A549 (cell line): ENCODE measurements at regions of chr17 and their contacts with region 1.

Region 1: DNA sequence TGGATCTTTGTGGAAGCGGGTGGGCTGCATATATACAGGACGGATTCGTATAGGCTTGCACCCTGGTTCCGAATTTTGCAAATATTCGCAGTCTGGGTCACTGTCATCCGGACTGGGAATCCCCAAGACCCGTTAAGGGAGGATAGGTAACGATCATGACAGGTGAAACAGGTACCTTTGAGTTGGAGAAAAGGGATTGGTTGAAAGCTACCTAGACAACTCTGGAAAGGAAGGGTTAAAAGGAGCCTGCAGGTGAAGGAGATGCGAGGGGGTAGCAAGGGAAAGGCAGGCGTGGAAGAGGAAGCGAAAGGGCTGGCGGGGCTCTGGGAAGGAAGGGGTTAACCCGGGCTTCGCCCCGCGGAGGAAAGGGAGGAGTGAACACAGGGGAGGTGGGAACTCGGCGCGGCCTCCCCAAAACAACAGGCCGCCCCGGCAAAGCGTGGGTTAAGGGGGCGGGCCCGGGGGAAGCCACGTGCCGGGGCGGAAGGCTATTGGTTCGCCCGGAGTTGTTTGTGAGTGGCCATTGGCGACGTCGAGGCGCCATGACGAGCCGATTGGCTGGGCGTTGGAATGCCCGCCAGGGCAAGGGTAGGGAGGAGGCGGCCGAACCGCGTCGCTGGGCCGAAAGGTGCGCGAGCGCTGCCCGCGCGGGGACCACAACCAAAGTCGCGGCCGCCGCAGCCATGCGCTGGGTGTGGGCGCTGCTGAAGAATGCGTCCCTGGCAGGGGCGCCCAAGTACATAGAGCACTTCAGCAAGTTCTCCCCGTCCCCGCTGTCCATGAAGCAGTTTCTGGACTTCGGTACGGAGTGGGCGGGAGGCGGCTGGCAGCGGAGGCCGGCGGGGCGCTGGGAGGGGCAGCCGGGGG is at the start of gene PDK2:
- DNase-seq: peak; percentile 98 to 99
- ATAC-seq: peak; percentile 67 to 94
- H3K4me3 ChIP-seq: peak within 1 kb of the TSS; percentile 76
- H3K27ac ChIP-seq: peak within 1 kb of the TSS; percentile 82 to 90
- H3K4me1 ChIP-seq: peaks cover 20% of the 10 kb centered on the region
- CTCF ChIP-seq: no peak
- EP300 ChIP-seq: no peak
- POLR2A ChIP-seq: peak; percentile 46
- RAD21 ChIP-seq: no peak
- polyA plus RNA-seq, gene PDK2: 28.5 and 34.4 TPM in 2 replicates

Region 2: GRCh38 chr17:50020841-50021599 is 74.0 kb before region 1 on chr17:
- CTCF ChIA-PET with region 1: interaction called, 190 read pairs
- POLR2A ChIA-PET with region 1: no interaction called
- DNase-seq: no peak
- ATAC-seq: 0 out of 6 replicates have a peak, but pooled peaks of 1 of the 2 experiments have one; percentile 40
- H3K4me3 ChIP-seq: no peak overlapping the region
- H3K27ac ChIP-seq: no peak overlapping the region
- H3K4me1 ChIP-seq: peaks cover under 1% of the 10 kb centered on the region; the same call in 1 of the 3 replicates
- CTCF ChIP-seq: no peak
- EP300 ChIP-seq: no peak
- POLR2A ChIP-seq: no peak
- RAD21 ChIP-seq: no peak

Region 3: DNA sequence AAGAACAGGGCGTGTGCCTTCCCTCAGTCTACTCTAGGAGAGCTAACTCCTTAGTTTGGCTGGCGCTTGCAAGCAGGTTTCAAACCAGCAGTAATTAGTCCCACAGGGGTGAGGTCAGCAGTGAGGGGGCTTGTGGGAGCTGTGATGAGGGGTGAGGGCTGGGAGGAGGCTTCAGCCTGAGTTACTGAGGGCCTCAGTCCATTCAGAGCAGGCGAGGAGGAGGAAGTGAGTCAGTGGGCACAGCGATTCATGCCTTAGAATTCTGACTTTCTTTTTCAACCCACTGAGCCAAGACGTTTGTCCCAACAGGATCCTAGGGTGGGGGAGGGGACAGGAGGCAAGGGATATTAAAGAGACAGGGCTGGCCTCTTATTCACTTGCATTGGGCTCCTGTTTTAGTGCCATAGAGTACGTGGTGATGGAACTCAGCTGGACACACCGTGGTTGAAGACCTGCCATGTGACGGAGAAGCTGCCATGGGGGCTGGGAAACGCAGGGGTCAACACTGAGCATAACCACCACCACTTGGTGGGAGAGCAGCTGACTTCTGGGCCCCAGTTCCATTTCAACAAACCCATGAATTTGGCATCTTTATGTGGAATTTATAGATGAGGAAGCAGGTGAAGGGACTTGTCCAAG is 47.4 kb before region 1 on chr17:
- CTCF ChIA-PET with region 1: interaction called, 285 read pairs
- POLR2A ChIA-PET with region 1: no interaction called
- DNase-seq: peak in 1 of 2 experiments; percentile 49
- ATAC-seq: peak in 1 of 2 experiments; percentile 5; a peak in 1 of 6 replicates
- H3K4me3 ChIP-seq: no peak overlapping the region
- H3K27ac ChIP-seq: peak overlapping the region; percentile 64 to 92
- H3K4me1 ChIP-seq: peaks cover 92% of the 10 kb centered on the region
- CTCF ChIP-seq: no peak
- EP300 ChIP-seq: no peak
- POLR2A ChIP-seq: no peak
- RAD21 ChIP-seq: no peak

Region 4: DNA sequence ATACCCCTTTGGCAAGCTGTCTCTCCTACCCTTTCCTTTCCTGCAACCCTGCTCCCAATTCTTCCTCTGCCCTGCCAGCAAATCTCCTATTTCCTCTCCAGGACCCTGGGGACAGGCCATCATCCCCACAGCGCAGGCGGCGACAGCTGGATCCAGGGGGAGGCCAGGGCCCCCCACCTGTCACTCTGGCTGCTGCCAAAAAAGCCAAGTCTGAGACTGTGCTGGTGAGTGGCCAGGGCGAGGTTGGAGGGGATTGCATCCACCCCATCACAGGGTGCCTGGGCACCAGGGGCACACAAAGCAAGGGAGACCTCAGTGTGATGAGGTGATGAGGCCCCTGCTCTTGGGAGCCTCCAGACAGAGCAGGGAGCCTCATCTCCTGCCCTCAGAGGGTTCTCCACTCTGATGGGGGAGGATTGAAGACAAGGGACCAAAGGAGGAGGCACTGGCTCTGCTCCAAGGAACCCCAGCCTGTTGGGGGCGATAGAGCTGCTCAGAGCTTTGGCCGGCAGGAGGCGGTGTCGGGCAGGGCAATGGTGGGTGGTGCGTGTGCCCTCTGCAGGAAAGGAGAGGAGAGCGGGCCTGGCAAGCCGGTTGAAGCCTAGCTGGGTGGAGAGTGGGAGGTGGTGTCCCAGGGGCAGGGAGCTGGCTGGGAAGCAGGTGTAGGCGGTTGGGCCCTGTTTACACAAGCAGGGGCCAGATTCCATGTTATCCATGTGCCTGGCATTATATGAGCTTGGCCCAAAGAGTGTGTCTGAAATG is 15.5 kb before region 1 on chr17:
- CTCF ChIA-PET with region 1: interaction called, 176 read pairs
- POLR2A ChIA-PET with region 1: interaction called, 3 read pairs
- DNase-seq: peak; percentile 79 to 87
- ATAC-seq: peak; percentile 73 to 88
- H3K4me3 ChIP-seq: no peak overlapping the region
- H3K27ac ChIP-seq: peak overlapping the region in 1 of 2 experiments; percentile 71; a peak in 3 of 6 replicates
- H3K4me1 ChIP-seq: peaks cover 12% of the 10 kb centered on the region; the same call in 2 of the 3 replicates
- CTCF ChIP-seq: peak; percentile 97
- EP300 ChIP-seq: no peak
- POLR2A ChIP-seq: no peak
- RAD21 ChIP-seq: peak; percentile 76 to 77

Region 5: GRCh38 chr17:50161023-50161910 is 66.3 kb after region 1 on chr17:
- CTCF ChIA-PET with region 1: interaction called, 1,356 read pairs
- POLR2A ChIA-PET with region 1: no interaction called
- DNase-seq: peak; percentile 92 to 100
- ATAC-seq: peak; percentile 88 to 96
- H3K4me3 ChIP-seq: peak overlapping the region; percentile 74
- H3K27ac ChIP-seq: peak overlapping the region; percentile 80 to 86
- H3K4me1 ChIP-seq: peaks cover 9% of the 10 kb centered on the region; the same call in 2 of the 3 replicates
- CTCF ChIP-seq: peak; percentile 98
- EP300 ChIP-seq: no peak
- POLR2A ChIP-seq: peak; percentile 92
- RAD21 ChIP-seq: peak; percentile 72 to 80

Region 6: DNA sequence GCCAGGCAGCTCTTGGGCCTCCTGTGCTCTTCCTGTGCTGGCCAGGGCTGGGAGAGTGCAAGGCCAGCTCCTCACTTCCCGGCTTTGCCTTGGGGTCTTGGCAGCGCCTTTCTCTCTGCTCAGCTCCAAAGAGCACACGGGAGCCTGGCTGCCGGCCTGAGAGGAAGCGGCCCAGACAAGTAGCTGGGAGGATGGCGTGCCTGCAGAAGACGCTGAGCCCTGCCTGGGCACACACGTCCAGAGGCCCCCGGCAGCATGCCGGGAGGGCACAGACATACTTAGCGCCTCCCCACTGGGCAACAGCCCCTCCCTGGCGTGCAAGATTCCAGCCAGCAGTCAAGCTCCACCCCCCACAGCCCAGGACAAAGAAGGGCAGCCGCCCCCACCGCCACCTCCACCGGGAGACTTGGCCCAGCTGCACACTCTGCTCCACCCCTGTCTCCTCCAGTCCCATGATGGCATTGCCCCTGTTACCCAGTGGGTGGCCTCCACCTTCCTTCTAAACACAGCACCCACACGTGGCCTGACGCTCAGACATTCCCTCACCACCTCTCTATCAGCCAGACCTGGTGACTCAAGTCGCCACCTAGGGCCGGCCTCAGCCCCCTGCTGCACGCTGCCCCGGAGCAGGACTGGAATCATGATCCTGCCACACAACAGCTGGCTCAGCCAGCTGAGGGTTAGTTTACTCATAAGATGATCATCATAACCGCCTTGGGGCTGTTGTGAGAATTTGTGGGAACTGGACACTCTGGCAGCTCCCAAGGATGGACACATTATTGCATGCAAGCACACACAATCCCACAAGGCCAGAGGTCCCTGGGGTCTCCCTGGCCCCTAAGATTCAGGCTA is 83.2 kb after region 1 on chr17:
- CTCF ChIA-PET with region 1: interaction called, 16 read pairs
- POLR2A ChIA-PET with region 1: no interaction called
- DNase-seq: peak; percentile 98
- ATAC-seq: peak; percentile 86 to 93
- H3K4me3 ChIP-seq: no peak overlapping the region
- H3K27ac ChIP-seq: peak overlapping the region; percentile 90 to 95
- H3K4me1 ChIP-seq: peaks cover 61% of the 10 kb centered on the region
- CTCF ChIP-seq: peak; percentile 86
- EP300 ChIP-seq: peak; percentile 67 to 71; a peak in 3 of 5 replicates
- POLR2A ChIP-seq: peak; percentile 73
- RAD21 ChIP-seq: peak; percentile 62 to 69